Heart right ventricle (tissue), 16 donors: ENCODE measurements at regions of chr17 and their contacts with region 1.

Region 1: GRCh38 chr17:42183741-42184711 is 1.2 kb downstream of the HCRT start:
- DNase-seq: peak; percentile 61 to 84
- ATAC-seq: peak; percentile 76 to 88 (median 85)
- H3K4me3 ChIP-seq: peak overlapping the region; percentile 34 to 68 (median 58)
- H3K27ac ChIP-seq: peak overlapping the region in 9 of 10 donors; percentile 61 to 91 (median 79)
- H3K4me1 ChIP-seq: peaks cover 0 to 57% (median 35%) of the 10 kb centered on the region in 9 donors
- H3K27me3 ChIP-seq: peaks cover 0 to 28% (median 17%) of the 10 kb centered on the region in 7 donors
- CTCF ChIP-seq: peak; percentile 73 to 98 (median 86)

Region 2: DNA sequence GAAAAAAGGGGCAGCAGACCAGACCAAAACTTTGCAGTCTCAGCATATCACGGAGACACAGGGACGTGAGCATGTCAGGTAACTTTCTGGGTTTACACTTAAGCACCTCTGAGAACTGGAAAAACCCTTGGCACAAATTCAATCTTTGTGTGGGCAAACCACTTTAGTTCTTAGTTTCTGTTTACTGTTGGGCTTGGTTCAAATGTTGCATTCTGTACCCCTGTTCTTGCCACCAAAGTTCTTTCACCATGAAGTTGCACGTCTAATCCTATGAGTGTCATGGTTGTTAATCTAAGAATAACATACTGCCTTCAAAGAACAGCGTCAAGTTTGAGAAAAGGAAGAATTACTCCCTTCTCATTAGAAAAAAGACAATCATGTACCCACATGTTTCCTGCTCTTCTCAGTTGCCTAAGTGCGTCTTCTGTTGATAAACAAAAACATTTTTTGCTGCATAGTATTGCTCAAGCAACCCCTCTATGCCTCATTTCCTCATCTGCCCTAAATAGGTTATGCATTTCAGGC is 845.0 kb before region 1 on chr17:
- intact Hi-C with region 1: no loop called
- DNase-seq: no peak
- ATAC-seq: no peak
- H3K4me3 ChIP-seq: no peak overlapping the region
- H3K27ac ChIP-seq: peak overlapping the region in 1 of 10 donors; percentile 67
- H3K4me1 ChIP-seq: peaks cover 0 to 20% (median 0%) of the 10 kb centered on the region in 9 donors
- H3K27me3 ChIP-seq: peaks cover 0 to 30% (median 6%) of the 10 kb centered on the region in 7 donors
- CTCF ChIP-seq: no peak

Region 3: DNA sequence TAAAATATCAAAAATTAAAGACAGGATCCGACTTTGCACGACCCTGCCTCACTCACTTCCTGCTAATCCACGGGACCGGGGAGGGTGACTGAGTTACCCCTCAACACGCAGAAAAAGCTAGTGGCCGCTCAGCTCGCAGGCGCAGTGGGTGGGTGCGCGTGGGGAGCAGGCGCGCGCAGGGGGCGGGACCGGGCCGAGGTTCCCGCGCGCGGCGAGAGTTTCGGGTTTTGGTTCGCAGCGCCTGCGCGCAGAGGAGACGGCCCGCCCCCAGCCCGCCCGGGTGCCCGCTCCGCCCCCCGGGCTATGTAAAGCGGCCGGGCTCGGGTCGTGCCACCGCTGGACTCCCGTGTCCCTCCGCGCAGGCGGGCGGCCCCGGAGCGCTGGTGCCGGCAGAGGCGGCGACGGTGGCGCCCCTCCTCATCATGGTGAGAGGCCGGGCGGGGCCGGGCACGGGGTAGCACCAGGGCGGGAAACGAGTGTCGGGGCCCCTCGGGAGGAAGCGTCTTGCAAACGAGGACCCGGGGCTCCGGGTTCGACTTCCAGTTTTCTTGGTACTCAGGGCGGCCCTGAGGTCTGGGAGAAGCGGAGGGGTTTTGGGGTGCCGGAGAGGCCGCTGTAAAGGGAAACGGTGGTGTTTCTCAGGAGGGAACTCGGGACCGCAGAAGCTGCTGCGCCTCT is 217.4 kb before region 1 on chr17 and contains the start of gene CNP:
- intact Hi-C with region 1: loop called in 1 of 10 experiments (anchors 10 kb)
- DNase-seq: peak; percentile 91 to 93
- ATAC-seq: peak; percentile 90 to 97 (median 95)
- H3K4me3 ChIP-seq: peak within 1 kb of the TSS; percentile 69 to 100 (median 92)
- H3K27ac ChIP-seq: peak within 1 kb of the TSS; percentile 72 to 93 (median 90)
- H3K4me1 ChIP-seq: peaks cover 8 to 57% (median 34%) of the 10 kb centered on the region in 9 donors
- H3K27me3 ChIP-seq: no peaks in the 10 kb centered on the region
- CTCF ChIP-seq: no peak
- total RNA-seq, gene CNP: 19.4 to 42.7 (median 26.2) TPM

Region 4: GRCh38 chr17:42067351-42068091 is 116.5 kb before region 1 on chr17:
- intact Hi-C with region 1: loop called in 2 of 10 experiments (anchors 5 kb)
- DNase-seq: peak; percentile 48 to 67
- ATAC-seq: peak in 4 of 8 donors; percentile 40 to 53 (median 42)
- H3K4me3 ChIP-seq: no peak overlapping the region
- H3K27ac ChIP-seq: no peak overlapping the region
- H3K4me1 ChIP-seq: peaks cover 0 to 17% (median 6%) of the 10 kb centered on the region in 9 donors
- H3K27me3 ChIP-seq: peaks cover 0 to 21% (median 17%) of the 10 kb centered on the region in 7 donors
- CTCF ChIP-seq: peak; percentile 78 to 96 (median 88)

Region 5: GRCh38 chr17:42120770-42121769 is 63.0 kb before region 1 on chr17 and contains the start of gene KAT2A:
- intact Hi-C with region 1: loop called in 6 of 10 experiments (anchors 2 to 5 kb)
- DNase-seq: peak; percentile 80 to 86
- ATAC-seq: peak; percentile 87 to 94 (median 92)
- H3K4me3 ChIP-seq: peak within 1 kb of the TSS; percentile 77 to 94 (median 82)
- H3K27ac ChIP-seq: peak within 1 kb of the TSS in 9 of 10 donors; percentile 68 to 84 (median 75)
- H3K4me1 ChIP-seq: peaks cover 5 to 47% (median 22%) of the 10 kb centered on the region in 9 donors
- H3K27me3 ChIP-seq: no peaks in the 10 kb centered on the region
- CTCF ChIP-seq: no peak
- total RNA-seq, gene KAT2A: 9.3 to 29.7 (median 13.3) TPM

Region 6: GRCh38 chr17:42201144-42201772 is 17.2 kb after region 1 on chr17:
- intact Hi-C with region 1: loop called in 1 of 10 experiments (anchors 2 kb)
- DNase-seq: no peak
- ATAC-seq: peak in 2 of 8 donors; percentile 4 to 34
- H3K4me3 ChIP-seq: no peak overlapping the region
- H3K27ac ChIP-seq: peak overlapping the region in 7 of 10 donors; percentile 10 to 48 (median 30)
- H3K4me1 ChIP-seq: peaks cover 0 to 17% (median 11%) of the 10 kb centered on the region in 9 donors
- H3K27me3 ChIP-seq: no peaks in the 10 kb centered on the region
- CTCF ChIP-seq: no peak

Region 7: GRCh38 chr17:42527273-42527703 is 343.3 kb after region 1 on chr17:
- intact Hi-C with region 1: loop called in 1 of 10 experiments (anchors 10 kb)
- DNase-seq: peak in 1 of 2 donors; percentile 81
- ATAC-seq: peak; percentile 67 to 92 (median 81)
- H3K4me3 ChIP-seq: no peak overlapping the region
- H3K27ac ChIP-seq: peak overlapping the region in 8 of 10 donors; percentile 4 to 97 (median 70)
- H3K4me1 ChIP-seq: peaks cover 16 to 61% (median 40%) of the 10 kb centered on the region in 9 donors
- H3K27me3 ChIP-seq: no peaks in the 10 kb centered on the region
- CTCF ChIP-seq: peak; percentile 68 to 91 (median 86)